ENCODE measurements at regions of chr2 and their contacts with region 1.

Region 1: DNA sequence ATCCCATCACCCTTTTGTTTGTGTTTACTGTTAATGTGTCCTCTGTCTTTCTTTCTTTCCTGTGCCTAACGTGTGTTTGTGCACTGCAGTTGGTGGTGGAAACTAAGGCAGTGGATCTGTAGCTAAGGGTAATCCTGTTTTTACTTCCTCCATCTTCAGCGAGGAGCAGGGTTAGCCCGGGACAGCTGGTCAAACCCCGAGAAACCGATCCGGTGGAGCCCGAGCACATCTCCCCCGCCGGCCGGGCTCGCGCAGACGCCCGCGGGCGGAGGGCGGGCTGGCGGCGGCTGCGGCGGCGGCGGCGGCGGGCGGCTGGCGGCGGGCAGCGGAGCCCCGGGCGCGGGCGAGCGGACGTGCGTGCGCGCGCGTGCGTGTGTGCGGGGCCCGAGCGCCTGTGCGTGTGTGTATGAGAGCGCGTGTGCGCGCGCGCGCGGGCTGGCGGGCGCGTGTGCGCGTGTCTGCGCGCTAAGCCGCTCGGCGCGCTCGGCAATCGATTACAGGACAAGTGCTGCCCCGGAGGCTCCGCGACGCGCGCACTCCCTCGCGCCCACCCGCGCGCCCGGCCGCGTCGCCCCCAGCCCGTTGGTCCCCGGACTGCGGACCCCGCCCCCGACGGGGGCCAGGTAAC is at the start of gene IKZF2:
- DNase-seq: peak; percentile 85
- H3K4me3 ChIP-seq: peak within 1 kb of the TSS; percentile 83 to 98 (median 83)
- H3K27ac ChIP-seq: peak within 1 kb of the TSS; percentile 85
- H3K4me1 ChIP-seq: peaks cover 15% of the 10 kb centered on the region
- H3K27me3 ChIP-seq: no peaks in the 10 kb centered on the region
- CTCF ChIP-seq: no peak
- total RNA-seq, gene IKZF2: 17.3 to 27.9 TPM

Region 2: GRCh38 chr2:212595037-212595654 is 556.4 kb before region 1 on chr2:
- CTCF ChIA-PET with region 1: no interaction called
- dilution Hi-C with region 1: no loop called
- in situ Hi-C with region 1: loop called in 1 of 2 experiments (anchors 5 kb)
- intact Hi-C with region 1: loop called (anchors 1 kb)
- DNase-seq: peak; percentile 46
- H3K4me3 ChIP-seq: no peak overlapping the region
- H3K27ac ChIP-seq: no peak overlapping the region
- H3K4me1 ChIP-seq: peaks cover 15% of the 10 kb centered on the region
- H3K27me3 ChIP-seq: no peaks in the 10 kb centered on the region
- CTCF ChIP-seq: peak; percentile 57 to 61

Region 3: DNA sequence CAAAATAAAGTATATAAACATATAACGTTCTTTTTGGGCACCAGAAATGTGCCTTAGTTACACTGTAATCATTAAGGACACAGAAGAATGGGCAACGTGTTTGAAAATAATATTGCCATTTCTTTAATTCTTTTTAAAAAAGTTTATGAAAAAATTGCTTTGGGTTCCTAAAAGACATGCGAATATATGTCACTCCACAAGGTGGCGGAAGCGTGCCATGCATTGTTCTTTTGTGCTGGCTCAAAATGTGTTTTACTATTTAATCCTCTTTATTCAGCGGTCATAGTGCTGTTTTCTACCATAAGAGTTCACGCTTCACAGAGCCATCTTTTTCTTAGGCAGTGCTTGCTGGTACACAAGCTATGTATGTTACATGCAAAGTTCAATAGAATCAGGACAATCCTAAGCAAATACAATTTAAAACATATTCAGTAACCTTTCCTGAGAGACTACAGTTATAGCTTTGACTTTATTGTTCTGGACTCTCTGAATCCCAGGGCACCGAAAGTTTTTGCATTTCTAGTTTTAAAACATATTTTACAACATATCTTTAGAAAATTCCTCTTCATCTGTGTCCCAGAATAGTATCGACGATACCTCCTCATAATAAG is 465.2 kb before region 1 on chr2:
- CTCF ChIA-PET with region 1: interaction called, 4 read pairs
- dilution Hi-C with region 1: no loop called
- in situ Hi-C with region 1: loop called (anchors 10 kb)
- intact Hi-C with region 1: loop called (anchors 1 kb)
- DNase-seq: peak; percentile 50
- H3K4me3 ChIP-seq: no peak overlapping the region
- H3K27ac ChIP-seq: no peak overlapping the region
- H3K4me1 ChIP-seq: no peaks in the 10 kb centered on the region
- H3K27me3 ChIP-seq: no peaks in the 10 kb centered on the region
- CTCF ChIP-seq: peak; percentile 75 to 83

Region 4: GRCh38 chr2:212777020-212777491 is 374.5 kb before region 1 on chr2:
- CTCF ChIA-PET with region 1: interaction called, 13 read pairs
- dilution Hi-C with region 1: no loop called
- in situ Hi-C with region 1: loop called in 1 of 2 experiments (anchors 5 kb)
- intact Hi-C with region 1: loop called (anchors 1 kb)
- DNase-seq: peak; percentile 52
- H3K4me3 ChIP-seq: no peak overlapping the region
- H3K27ac ChIP-seq: no peak overlapping the region
- H3K4me1 ChIP-seq: peaks cover 7% of the 10 kb centered on the region
- H3K27me3 ChIP-seq: no peaks in the 10 kb centered on the region
- CTCF ChIP-seq: peak; percentile 60 to 69

Region 5: GRCh38 chr2:212863185-212863588 is 288.4 kb before region 1 on chr2:
- CTCF ChIA-PET with region 1: interaction called, 8 read pairs
- dilution Hi-C with region 1: no loop called
- in situ Hi-C with region 1: no loop called
- intact Hi-C with region 1: loop called (anchors 1 kb)
- DNase-seq: peak; percentile 50
- H3K4me3 ChIP-seq: no peak overlapping the region
- H3K27ac ChIP-seq: no peak overlapping the region
- H3K4me1 ChIP-seq: peaks cover 4% of the 10 kb centered on the region
- H3K27me3 ChIP-seq: no peaks in the 10 kb centered on the region
- CTCF ChIP-seq: peak; percentile 59 to 83

Region 6: GRCh38 chr2:212974692-212975091 is 176.9 kb before region 1 on chr2:
- CTCF ChIA-PET with region 1: no interaction called
- dilution Hi-C with region 1: no loop called
- in situ Hi-C with region 1: no loop called
- intact Hi-C with region 1: loop called (anchors 5 kb)
- DNase-seq: peak; percentile 88
- H3K4me3 ChIP-seq: no peak overlapping the region
- H3K27ac ChIP-seq: peak overlapping the region; percentile 75
- H3K4me1 ChIP-seq: peaks cover 20% of the 10 kb centered on the region
- H3K27me3 ChIP-seq: no peaks in the 10 kb centered on the region
- CTCF ChIP-seq: no peak

Region 7: DNA sequence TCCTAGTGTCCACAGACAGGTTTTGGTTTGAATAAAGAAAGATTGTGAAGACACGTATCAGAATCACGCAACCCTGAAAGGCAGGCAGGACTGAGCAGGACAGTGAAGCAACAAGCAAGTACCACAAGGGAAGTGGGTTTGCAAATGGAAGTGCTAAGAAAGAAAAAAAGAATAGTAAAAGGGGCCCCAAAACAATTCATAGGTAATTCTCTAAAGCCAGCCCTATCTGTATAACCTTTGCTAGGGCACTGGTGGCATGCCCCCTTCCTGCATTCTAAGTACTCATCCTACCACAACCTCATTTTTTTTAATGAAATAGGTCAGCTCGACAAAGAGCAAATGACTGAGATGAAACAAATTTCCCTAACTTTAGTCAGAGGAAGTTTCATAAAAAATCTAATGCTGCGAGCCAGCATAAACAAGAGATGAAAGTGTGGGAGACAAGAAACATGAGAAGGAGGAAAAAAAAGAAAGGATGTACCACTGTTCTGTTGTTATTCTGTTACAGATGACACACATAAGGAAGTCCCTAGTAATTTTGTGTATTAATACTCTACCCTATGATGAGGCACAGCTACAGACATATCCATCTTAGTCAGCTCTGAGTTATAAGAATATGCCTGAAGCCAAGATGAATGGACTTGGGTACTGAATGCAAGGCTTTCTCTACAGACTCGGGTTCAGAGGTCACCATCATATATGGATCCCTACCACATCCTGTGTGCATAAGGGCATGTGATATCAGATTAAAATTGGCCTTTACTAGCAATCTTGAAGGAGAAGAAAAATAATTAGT is 32.3 kb before region 1 on chr2:
- CTCF ChIA-PET with region 1: interaction called, 3 read pairs
- dilution Hi-C with region 1: no loop called
- in situ Hi-C with region 1: no loop called
- intact Hi-C with region 1: loop called (anchors 2 kb)
- DNase-seq: peak; percentile 93
- H3K4me3 ChIP-seq: peak overlapping the region in 2 of 3 experiments; percentile 5 to 27
- H3K27ac ChIP-seq: peak overlapping the region; percentile 56
- H3K4me1 ChIP-seq: peaks cover 18% of the 10 kb centered on the region
- H3K27me3 ChIP-seq: no peaks in the 10 kb centered on the region
- CTCF ChIP-seq: no peak

Region 8: DNA sequence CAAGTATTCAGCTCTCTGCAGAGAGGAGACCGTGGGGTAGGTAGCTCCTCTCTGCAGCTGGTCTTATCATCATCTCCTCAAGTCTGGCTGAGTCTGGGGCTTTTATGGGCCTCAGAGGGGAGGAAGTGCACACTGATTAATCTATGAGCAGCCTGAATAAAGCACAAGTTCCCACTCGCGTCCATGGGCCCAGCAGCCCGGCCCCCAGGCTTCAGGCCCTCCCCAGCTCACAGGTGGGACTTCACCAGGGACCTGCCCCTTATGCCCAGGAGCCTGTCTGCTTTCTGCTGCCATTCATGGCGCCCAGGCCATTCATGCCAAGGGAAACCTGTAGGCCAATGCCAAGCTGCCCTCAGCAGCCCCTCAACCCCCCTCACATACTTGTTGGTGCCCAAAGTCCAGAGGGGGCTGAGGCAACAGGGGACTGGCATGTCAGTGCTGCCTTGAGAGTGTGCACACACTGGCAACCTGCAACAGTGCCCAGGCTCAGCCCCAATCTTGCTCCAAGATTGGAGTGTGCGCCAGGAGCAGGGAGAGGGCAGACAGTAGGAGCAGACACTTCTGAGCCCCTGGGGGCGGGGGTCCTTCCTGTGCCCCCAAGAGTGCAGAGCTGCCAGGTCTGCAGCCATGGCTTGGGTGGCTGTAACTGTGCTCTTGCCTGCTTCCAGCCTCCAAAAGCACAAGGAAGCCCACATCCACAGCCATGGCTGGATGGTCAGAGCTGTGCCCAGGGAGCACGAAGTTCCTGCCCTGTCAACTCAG is 883.7 kb after region 1 on chr2:
- CTCF ChIA-PET with region 1: no interaction called
- dilution Hi-C with region 1: no loop called
- in situ Hi-C with region 1: no loop called
- intact Hi-C with region 1: no loop called
- DNase-seq: no peak
- H3K4me3 ChIP-seq: no peak overlapping the region
- H3K27ac ChIP-seq: no peak overlapping the region
- H3K4me1 ChIP-seq: no peaks in the 10 kb centered on the region
- H3K27me3 ChIP-seq: no peaks in the 10 kb centered on the region
- CTCF ChIP-seq: no peak